AG04450 (cell line): ENCODE measurements at regions of chr3 and their contacts with region 1.

Region 1: GRCh38 chr3:17645072-17645698 is 97.2 kb downstream of the TBC1D5 start:
- DNase-seq: peak; percentile 36
- H3K4me3 ChIP-seq: no peak overlapping the region
- H3K27ac ChIP-seq: no peak overlapping the region
- H3K27me3 ChIP-seq: no peaks in the 10 kb centered on the region
- CTCF ChIP-seq: peak; percentile 83

Region 2: DNA sequence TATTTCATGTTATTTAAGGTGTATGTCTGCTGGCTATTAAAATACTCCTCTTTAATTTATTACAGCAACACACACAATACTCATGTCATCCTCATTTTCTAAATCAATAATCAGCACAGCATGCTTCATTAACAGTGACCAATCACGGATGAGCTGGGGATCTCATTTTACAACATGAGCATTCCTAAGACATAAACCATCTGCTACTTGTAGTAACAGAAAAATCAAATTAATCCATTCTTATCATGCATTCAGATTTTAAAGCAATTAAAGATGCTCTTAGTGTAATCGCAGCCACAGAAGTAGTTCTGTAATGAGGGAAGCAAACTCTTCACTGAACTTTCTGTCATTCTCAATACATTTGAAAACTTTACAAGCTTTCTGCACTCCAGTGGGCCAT is 93.9 kb before region 1 on chr3:
- CTCF ChIA-PET with region 1: interaction called, 13 read pairs
- POLR2A ChIA-PET with region 1: no interaction called
- DNase-seq: no peak
- H3K4me3 ChIP-seq: no peak overlapping the region
- H3K27ac ChIP-seq: no peak overlapping the region
- H3K27me3 ChIP-seq: no peaks in the 10 kb centered on the region
- CTCF ChIP-seq: no peak

Region 3: GRCh38 chr3:17632401-17633100 is 12.6 kb before region 1 on chr3:
- CTCF ChIA-PET with region 1: interaction called, 18 read pairs
- POLR2A ChIA-PET with region 1: no interaction called
- DNase-seq: peak; percentile 26
- H3K4me3 ChIP-seq: no peak overlapping the region
- H3K27ac ChIP-seq: no peak overlapping the region
- H3K27me3 ChIP-seq: no peaks in the 10 kb centered on the region
- CTCF ChIP-seq: no peak

Region 4: DNA sequence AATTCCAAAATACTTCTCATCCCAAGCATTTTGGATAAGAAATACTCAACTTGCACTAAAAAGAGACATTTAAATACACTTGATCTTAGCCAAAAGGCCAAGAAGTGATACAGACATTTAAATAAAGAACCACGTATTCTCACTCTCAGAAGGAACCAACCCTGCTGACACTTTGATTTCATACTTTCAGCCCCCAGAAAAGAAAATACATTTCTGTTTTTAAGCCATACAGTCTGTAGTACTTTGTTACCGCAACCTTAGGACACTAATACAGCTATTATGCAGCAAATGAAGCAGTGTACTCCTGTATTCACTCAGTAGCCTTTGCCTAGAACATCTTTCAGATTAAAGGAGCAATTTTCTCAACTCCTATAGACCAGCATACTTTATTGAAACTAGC is 10.6 kb after region 1 on chr3:
- CTCF ChIA-PET with region 1: interaction called, 21 read pairs
- POLR2A ChIA-PET with region 1: no interaction called
- DNase-seq: no peak
- H3K4me3 ChIP-seq: no peak overlapping the region
- H3K27ac ChIP-seq: no peak overlapping the region
- H3K27me3 ChIP-seq: no peaks in the 10 kb centered on the region
- CTCF ChIP-seq: no peak

Region 5: DNA sequence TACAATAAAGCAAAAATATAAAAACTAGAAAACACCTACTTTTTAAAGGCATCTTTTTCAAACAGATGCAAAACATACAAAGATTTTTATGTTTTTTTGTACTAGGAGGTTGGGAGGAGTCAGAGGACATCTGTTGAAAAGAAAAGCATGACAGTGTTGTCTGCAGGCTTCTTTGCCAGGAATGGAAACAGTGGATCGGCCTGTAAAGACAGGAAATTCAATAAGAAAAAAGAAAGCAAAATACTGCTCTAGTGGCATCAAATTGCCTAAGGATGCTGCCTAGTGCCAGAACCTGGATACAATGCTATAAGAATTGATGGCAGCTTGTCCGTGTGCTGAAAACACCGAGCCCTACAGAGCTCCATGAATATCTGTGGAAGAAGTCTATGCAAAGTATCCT is 27.3 kb after region 1 on chr3:
- CTCF ChIA-PET with region 1: interaction called, 16 read pairs
- POLR2A ChIA-PET with region 1: no interaction called
- DNase-seq: no peak
- H3K4me3 ChIP-seq: no peak overlapping the region
- H3K27ac ChIP-seq: no peak overlapping the region
- H3K27me3 ChIP-seq: no peaks in the 10 kb centered on the region
- CTCF ChIP-seq: no peak

Region 6: DNA sequence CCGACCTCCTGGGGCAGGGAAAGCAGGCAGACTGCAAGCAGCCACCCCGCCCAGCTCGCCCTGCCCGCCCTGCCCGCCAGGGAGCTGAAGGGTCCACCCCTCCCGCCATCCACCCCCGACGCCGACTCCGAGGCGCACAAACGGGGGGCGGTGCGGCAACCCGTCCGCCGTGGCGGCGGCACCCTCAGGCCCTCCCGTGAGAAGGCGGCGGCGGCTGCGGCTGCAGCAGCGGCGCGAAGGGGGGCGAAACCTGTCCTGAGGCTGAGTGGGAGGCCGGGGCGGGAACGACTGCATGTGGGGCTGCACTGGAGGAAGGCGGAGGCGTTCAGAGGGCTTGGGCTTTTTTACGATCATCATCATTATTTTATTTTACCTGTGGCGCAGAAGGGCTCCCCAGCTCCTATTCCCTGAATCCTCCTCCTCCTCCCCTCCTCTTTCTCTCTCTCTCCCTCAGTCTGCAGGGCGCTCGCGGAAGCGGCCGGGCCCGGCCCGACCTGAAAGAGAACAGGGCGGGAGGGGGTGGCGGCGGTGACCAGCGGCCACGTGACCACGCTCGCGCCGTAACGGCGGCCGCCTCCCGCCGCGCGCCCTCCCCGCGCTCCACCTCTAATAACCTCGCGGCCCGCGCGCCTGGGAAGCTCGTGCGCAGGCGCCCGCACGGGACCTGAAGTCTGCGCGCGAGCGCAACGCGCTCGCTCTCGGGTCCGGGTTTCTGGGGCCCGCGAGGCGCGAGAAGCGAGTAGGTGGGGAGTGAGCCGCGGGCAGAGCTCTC is 97.1 kb after region 1 on chr3 and contains the start of gene TBC1D5:
- CTCF ChIA-PET with region 1: interaction called, 4 read pairs
- POLR2A ChIA-PET with region 1: interaction called, 10 read pairs
- DNase-seq: peak; percentile 96
- H3K4me3 ChIP-seq: peak within 1 kb of the TSS; percentile 78
- H3K27ac ChIP-seq: peak within 1 kb of the TSS; percentile 91
- H3K27me3 ChIP-seq: no peaks in the 10 kb centered on the region
- CTCF ChIP-seq: no peak
- polyA plus RNA-seq, gene TBC1D5: 35.5 and 44.6 TPM in 2 replicates